ENCODE measurements at regions of chr3 and their contacts with region 1.

Region 1: GRCh38 chr3:39088889-39089288 is 18.5 kb downstream of the GORASP1 start:
- DNase-seq: no peak
- H3K4me3 ChIP-seq: no peak overlapping the region
- H3K27me3 ChIP-seq: no peaks in the 10 kb centered on the region
- CTCF ChIP-seq: no peak

Region 2: GRCh38 chr3:38669668-38670067 is 419.2 kb before region 1 on chr3:
- CTCF ChIA-PET with region 1: no interaction called
- POLR2A ChIA-PET with region 1: no interaction called
- DNase-seq: no peak
- H3K4me3 ChIP-seq: no peak overlapping the region
- H3K27me3 ChIP-seq: peaks cover 1% of the 10 kb centered on the region; the same call in 1 of the 2 replicates
- CTCF ChIP-seq: no peak

Region 3: DNA sequence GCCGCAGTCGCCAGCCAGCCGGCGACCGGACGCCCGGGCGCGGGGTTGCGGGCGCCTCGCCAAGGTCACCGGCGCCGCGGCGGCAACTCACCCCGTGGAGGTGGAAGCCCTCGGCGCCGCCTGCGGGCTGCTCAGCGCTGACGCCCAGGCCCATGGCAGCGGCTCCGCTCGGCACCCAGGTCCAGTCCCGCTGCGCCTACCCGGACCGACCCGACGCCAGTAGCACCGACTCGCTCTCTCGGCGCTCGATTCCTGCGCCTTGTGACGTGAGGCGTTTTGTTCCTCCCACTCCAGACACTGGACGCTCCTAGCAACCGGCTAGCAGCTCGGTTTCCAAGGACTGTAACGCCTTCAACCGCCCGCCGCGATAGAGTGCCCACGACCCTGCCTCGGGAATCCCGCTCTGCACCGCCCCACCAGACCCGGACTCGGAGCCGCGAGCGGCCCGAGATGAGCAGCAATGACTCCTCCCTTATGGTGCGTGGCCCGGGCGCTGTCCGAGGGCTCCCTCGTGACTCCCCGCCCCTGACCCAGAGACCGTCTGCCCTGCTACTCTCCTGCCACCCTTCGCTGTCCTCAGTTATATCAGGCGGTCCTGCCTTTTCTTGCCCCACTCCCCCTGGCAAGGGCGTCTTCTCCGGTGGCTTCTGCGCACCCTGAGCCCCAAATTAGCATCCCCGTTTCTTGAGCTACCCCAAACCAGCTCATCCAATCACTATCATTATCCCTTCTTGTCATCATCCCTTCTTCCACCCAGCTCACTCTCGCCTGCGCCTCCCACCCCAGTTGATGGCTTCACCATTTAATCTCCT is 18.7 kb after region 1 on chr3 and contains the starts of genes GORASP1 and TTC21A:
- CTCF ChIA-PET with region 1: interaction called, 10 read pairs
- POLR2A ChIA-PET with region 1: no interaction called
- DNase-seq: peak; percentile 41
- H3K4me3 ChIP-seq: peak within 1 kb of the TSS; percentile 89
- H3K27me3 ChIP-seq: no peaks in the 10 kb centered on the region
- CTCF ChIP-seq: no peak
- polyA plus RNA-seq, gene GORASP1: 58.3 and 87.0 TPM in 2 replicates
- polyA plus RNA-seq, gene TTC21A: 2.3 and 3.1 TPM in 2 replicates

Region 4: DNA sequence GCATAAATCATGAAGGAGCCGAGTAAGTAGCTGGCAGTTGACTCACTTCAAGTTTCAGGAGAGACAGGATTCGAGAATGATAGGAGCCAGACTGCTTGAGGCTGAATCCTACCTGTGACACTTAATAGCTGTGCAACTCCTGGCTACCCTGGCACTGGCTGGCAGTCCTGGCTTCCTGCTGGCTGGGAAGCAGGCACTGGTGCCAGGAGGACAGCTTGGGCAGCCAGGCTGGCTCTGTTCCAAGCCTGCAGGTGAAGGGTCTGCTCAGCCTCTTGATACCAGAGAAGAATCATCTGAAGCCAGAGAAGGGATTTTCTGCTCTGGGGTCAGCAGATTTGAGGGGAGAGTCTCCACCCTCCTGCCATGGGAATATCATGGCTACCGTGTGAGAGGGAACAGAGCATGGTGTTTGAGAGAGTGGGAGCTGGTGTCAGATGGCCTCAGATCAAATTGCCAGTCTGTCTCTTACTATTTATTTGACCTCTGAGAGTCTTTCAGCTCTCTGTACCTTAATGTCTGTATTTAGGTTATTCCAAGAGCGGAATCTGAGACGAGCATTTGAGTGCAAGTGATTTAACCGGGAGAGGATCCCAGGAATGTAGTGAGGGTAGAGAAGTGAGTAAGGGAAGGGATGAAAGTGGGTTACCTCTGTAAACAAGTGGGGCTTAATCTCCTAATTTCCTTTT is 107.9 kb after region 1 on chr3:
- CTCF ChIA-PET with region 1: no interaction called
- POLR2A ChIA-PET with region 1: no interaction called
- DNase-seq: no peak
- H3K4me3 ChIP-seq: no peak overlapping the region
- H3K27me3 ChIP-seq: no peaks in the 10 kb centered on the region
- CTCF ChIP-seq: no peak

Region 5: DNA sequence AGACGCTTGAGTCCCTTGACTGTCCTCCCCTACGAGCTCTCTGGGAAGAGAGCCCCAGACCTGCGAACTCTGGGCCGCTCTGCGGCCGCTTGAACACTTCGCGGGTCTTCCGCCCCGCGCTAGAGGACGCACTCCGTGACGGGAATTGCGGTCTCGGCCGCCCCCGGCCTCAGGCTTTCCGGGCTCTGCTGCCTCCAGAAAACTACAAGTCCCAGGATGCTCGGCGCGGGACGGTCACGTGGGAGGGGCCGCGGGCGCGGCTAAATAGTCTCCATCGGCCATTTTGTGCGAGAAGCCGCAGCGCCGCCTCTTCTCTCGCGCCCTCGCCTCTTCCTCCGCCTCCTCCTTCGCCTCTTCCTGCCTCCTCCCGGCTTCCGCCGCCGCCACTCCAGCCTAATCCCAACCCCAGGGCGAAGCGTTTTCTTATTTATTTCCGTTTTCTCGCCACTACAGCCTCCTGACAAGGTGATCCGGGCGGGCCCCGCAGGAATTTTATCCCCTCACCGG is 1220.6 kb after region 1 on chr3 and contains the start of gene EIF1B:
- CTCF ChIA-PET with region 1: no interaction called
- POLR2A ChIA-PET with region 1: no interaction called
- DNase-seq: peak; percentile 81
- H3K4me3 ChIP-seq: peak within 1 kb of the TSS; percentile 94
- H3K27me3 ChIP-seq: no peaks in the 10 kb centered on the region
- CTCF ChIP-seq: peak; percentile 97
- polyA plus RNA-seq, gene EIF1B: 18.6 and 38.9 TPM in 2 replicates

Measured in BJ (cell line).